ENCODE measurements at regions of chr13 and their contacts with region 1.

Region 1: DNA sequence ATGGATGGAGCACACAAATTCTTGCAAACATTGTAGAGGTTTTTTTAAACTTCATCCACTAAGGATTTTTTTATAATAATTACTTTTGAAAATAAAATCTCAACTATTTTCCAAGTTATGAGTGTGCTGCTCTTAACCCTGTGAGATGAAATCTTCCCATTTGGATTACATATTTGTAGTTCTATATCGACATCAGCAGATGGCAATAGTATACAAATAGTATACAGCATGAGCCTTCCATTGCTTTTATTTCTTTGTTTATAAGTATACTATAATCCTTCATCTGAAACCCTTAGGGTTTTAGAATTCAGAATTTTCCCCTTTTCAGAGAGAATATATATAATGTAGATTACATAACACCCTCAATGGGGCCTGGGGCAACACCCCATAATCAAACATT is 70.5 kb downstream of the GJA3 start:
- DNase-seq: no peak
- H3K4me3 ChIP-seq: no peak overlapping the region
- CTCF ChIP-seq: no peak

Region 2: GRCh38 chr13:20073775-20074174 is 16.6 kb before region 1 on chr13:
- CTCF ChIA-PET with region 1: no interaction called
- POLR2A ChIA-PET with region 1: no interaction called
- DNase-seq: no peak
- H3K4me3 ChIP-seq: no peak overlapping the region
- CTCF ChIP-seq: no peak

Region 3: GRCh38 chr13:20160847-20161274 is 70.5 kb after region 1 on chr13 and contains the start of gene GJA3:
- CTCF ChIA-PET with region 1: interaction called, 12 read pairs
- POLR2A ChIA-PET with region 1: no interaction called
- DNase-seq: no peak
- H3K4me3 ChIP-seq: peak within 1 kb of the TSS; percentile 47
- CTCF ChIP-seq: no peak

Measured in AG04449 (cell line).